Activated CD8-positive, alpha-beta T cell treated with anti-CD3 and anti-CD28 coated beads for 36 hours (primary cell): ENCODE measurements at regions of chr14 and their contacts with region 1.

Region 1: DNA sequence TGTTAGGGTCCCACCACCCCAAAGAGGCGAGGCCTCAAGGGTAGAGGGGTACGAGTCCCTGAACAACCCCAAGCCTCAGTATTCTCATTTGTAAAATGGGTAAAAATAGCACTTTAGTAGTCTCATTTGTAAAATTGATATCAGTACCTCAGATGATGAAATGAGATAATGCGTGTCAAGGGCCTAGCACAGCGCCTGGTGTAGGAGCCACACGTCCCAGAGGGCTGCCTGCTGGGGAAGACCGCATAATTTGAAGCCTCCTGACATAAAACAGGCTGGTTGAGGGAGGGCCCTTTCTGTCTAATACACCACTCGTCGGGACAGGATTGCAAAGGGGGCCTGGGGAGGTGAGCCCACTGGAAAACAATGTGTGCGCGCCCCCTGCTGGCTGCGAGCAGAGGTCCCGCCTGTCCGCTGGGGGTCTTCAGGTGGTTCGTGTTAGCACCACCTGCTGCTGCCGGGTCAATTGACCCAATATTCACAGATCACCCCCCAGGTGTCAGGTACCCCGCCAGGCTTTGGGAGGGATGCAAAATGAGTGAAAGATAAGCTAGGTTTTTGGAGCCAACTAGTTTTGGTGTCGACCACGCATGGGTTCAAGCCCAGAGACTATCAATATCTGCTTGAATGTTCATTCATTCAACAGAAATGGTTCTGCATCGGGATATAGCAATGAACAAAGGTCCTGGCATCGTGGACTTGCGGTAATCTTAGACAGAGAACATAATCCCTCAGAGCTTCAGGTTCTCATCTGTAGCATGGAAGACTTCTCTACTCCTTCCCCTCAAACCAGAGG is 24.7 kb upstream of the IRF2BPL start:
- DNase-seq: peak; percentile 90
- ATAC-seq: peak; percentile 93
- H3K4me3 Mint-ChIP-seq: no peak overlapping the region
- H3K27ac Mint-ChIP-seq: peak overlapping the region; percentile 75
- H3K4me1 Mint-ChIP-seq: peaks cover 17% of the 10 kb centered on the region
- H3K27me3 Mint-ChIP-seq: no peaks in the 10 kb centered on the region
- CTCF ChIP-seq: peak; percentile 100

Region 2: DNA sequence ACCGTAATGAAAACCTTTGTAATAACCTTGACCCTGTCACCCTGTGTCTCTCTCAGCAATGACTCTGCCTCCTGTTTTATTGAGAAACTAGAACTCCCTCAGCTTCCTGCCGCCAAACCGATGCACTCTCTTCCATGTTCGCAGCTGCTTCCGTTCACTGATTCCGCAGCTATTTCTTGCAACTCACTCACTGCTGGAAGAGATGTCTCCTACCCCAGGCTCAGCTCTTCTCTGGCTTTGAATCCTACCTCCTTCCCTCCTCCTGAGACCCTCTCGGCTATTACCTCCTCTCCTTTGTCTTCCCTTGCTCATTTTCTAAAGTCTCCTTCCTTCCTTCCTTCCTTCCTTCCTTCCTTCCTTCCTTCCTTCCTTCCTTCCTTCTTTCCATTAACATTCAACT is 606.3 kb before region 1 on chr14:
- CTCF ChIA-PET with region 1: no interaction called
- POLR2A ChIA-PET with region 1: no interaction called
- intact Hi-C with region 1: no loop called
- DNase-seq: no peak
- ATAC-seq: no peak
- H3K4me3 Mint-ChIP-seq: no peak overlapping the region
- H3K27ac Mint-ChIP-seq: no peak overlapping the region
- H3K4me1 Mint-ChIP-seq: no peaks in the 10 kb centered on the region
- H3K27me3 Mint-ChIP-seq: peaks cover 7% of the 10 kb centered on the region
- CTCF ChIP-seq: no peak

Region 3: DNA sequence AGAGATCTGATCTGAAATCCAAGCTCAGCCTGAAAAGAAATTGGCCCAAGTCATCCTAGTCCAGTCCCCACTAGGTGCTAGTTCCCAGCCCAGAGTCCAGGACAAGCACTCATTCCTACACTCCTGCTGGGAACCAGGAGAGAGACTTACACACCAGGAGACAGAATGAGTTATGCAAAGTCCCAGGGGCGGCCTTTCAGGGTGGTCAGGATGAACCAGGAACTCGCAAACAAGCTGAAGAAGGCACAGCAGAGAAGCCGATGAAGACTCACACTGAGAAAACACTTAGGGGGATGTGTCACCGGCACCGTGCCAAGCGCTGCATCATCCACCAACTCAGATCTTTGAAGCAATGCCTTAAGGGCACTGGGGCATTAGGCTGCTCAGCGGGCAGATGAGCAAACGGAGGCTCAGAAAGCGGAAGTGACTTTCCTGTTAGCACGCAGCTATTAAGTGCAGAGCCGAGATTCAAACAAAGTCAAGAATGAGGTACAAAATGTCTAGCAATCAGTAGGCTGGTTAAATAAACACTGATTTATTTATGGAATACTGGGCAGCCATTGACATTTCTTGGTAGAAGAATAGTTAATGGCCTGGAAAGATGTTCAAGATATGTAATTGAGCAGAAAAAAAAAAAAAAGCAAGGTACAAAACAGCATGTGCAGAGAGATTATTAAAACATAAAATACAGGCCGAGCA is 148.4 kb before region 1 on chr14:
- CTCF ChIA-PET with region 1: interaction called, 103 read pairs
- POLR2A ChIA-PET with region 1: no interaction called
- intact Hi-C with region 1: no loop called
- DNase-seq: peak; percentile 95
- ATAC-seq: peak; percentile 93
- H3K4me3 Mint-ChIP-seq: no peak overlapping the region
- H3K27ac Mint-ChIP-seq: peak overlapping the region; percentile 76
- H3K4me1 Mint-ChIP-seq: peaks cover 18% of the 10 kb centered on the region
- H3K27me3 Mint-ChIP-seq: no peaks in the 10 kb centered on the region
- CTCF ChIP-seq: no peak

Region 4: GRCh38 chr14:76947078-76947837 is 106.0 kb before region 1 on chr14:
- CTCF ChIA-PET with region 1: interaction called, 24 read pairs
- POLR2A ChIA-PET with region 1: no interaction called
- intact Hi-C with region 1: no loop called
- DNase-seq: peak; percentile 92
- ATAC-seq: peak; percentile 92
- H3K4me3 Mint-ChIP-seq: no peak overlapping the region
- H3K27ac Mint-ChIP-seq: peak overlapping the region; percentile 79
- H3K4me1 Mint-ChIP-seq: peaks cover 41% of the 10 kb centered on the region
- H3K27me3 Mint-ChIP-seq: no peaks in the 10 kb centered on the region
- CTCF ChIP-seq: peak; percentile 45